ENCODE measurements at regions of chrX and their contacts with region 1.

Region 1: DNA sequence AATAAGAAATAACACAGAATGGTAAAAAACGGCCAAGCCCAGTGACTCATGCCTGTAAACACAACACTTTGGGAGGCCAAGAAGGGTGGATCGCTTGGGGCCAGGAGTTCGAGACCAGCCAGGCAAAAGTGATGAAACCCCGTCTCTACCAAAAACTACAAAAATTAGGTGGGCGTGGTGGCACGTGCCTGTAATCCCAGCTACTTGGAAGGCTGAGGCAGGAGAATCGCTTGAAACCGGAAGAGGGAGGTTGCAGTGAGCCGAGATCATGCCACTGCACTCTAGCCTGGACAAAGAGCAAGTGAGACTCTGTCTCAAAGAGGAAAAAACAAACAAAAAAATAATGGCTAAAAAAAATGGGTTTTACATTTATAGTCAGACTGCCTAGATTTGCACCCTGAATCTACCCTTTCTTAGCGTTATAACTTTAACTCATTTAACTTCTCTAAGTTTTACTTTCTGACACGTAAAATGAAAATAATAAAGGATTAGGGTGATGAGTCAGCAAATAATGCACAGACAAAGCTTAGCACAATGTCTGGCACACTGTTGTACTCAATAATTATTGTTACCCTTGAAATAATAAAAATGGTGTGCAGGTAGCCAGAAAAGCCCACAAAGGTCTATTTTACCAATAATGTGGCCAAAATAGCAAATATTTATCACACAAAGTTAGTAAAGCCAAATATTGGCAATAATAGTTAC is 55.0 kb downstream of the ATP11C start:
- H3K4me3 Mint-ChIP-seq: no peak overlapping the region
- H3K27ac Mint-ChIP-seq: no peak overlapping the region
- H3K4me1 Mint-ChIP-seq: peaks cover 10% of the 10 kb centered on the region
- H3K27me3 Mint-ChIP-seq: no peaks in the 10 kb centered on the region

Region 2: DNA sequence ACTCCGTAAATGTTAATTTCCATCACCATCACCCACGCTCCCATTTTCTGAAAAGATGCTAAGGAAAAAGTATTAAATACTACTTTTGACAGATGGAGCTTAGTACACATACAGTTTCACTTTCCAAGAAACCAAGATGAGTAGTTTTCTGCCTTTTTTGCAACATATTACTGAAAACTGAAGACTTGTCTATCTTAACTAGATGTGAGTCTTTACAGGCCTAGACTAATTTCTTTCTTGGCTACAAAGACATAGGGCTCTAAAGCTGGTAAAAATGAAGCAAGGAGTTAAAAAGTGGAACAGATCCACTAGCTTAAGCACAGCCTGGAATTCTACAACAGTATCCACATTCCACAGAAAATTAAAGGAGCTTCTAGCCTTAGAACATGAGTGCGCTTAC is 13.2 kb before region 1 on chrX:
- intact Hi-C with region 1: no loop called
- H3K4me3 Mint-ChIP-seq: no peak overlapping the region
- H3K27ac Mint-ChIP-seq: no peak overlapping the region
- H3K4me1 Mint-ChIP-seq: no peaks in the 10 kb centered on the region
- H3K27me3 Mint-ChIP-seq: no peaks in the 10 kb centered on the region

Region 3: DNA sequence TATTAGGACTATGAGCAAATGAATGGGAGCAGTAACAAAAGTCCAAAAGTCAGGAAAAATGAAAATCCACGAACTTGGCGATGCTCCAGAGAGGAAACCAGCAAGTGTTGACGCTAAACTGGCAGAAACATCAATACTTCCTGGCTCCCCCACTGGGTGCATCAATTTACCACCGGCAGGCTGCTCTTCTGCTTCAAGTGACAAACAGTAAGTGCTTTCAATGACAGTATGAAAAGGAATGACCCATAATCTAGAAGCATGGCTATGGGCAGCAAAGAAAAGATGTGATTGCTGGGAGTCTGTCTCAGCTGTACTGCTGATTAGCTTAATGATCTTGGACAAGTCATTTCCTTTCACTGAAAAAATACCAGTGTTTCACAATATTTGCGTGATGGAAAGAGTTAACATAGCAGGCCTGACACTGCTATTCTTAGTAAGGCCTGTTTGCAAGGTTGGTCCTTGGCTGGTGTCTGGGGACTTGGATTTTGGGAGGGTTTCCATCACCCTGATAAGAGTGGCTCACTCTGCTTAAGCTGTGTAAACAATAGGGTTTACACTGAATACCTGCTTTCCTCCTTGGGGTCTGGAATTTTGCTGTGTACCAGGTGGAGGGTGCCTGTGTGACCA is 46.3 kb after region 1 on chrX:
- intact Hi-C with region 1: loop called (anchors 10 kb)
- H3K4me3 Mint-ChIP-seq: no peak overlapping the region
- H3K27ac Mint-ChIP-seq: no peak overlapping the region
- H3K4me1 Mint-ChIP-seq: peaks cover 20% of the 10 kb centered on the region
- H3K27me3 Mint-ChIP-seq: no peaks in the 10 kb centered on the region

Region 4: DNA sequence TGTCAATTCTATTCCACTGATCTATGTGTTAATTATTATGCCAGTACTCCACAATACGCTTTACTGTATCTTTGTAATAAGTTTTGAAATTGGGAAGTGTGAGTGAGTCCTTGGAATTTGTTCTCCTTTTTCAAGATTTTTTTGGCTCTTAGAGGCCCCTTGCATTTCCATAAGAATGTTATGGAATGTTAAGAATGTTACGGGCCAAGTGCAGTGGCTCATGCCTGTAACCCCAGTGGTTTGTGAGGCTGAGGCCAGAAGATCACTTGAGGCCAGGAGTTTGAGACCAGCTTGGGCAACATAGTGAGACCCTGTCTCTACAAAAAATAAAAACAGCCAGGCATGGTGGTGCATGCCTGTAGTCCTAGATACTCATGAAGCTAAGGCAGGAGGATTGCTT is 255.1 kb after region 1 on chrX:
- intact Hi-C with region 1: no loop called
- H3K4me3 Mint-ChIP-seq: no peak overlapping the region
- H3K27ac Mint-ChIP-seq: no peak overlapping the region
- H3K4me1 Mint-ChIP-seq: no peaks in the 10 kb centered on the region
- H3K27me3 Mint-ChIP-seq: no peaks in the 10 kb centered on the region

Measured in dendritic cell treated with granulocyte-macrophage colony-stimulating factor and Interleukin-4, amounts not matched to agents 40 ng/mL and 50 ng/mL, for 4 days (primary cell).